ENCODE measurements at regions of chr7 and their contacts with region 1.

Region 1: DNA sequence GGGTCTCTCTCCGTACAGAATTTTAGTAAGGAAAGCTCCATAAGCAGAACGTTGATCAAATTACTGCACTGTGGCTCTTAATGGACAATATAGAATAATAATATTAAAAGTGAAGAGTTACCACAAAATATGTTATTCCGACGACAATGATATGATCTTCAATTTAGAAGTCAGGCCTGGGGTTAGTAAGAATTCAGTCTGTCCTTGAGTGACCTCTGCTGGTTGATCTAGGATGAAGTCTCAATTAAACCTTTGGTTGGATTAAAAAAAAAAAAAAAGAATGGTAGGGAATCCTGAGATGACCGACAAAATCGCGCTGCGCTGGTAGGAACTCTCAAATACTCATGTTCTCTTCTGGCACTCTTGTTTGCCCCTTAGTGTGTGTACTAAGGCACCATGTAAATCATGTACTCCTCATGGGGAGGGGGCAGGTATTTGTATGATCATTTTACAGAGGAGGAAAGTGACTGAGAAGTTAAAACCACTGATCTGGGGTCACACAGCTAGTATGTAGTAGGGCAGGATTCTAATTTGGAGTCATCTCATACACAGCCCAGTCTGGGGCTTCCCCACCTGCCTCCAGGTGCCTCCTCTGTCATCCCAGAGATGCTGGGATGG is 161.3 kb upstream of the NPVF start:
- DNase-seq: no peak
- H3K4me3 ChIP-seq: no peak overlapping the region
- H3K27ac ChIP-seq: no peak overlapping the region
- H3K4me1 ChIP-seq: peaks cover 0 to 53% (median 48%) of the 10 kb centered on the region in 4 donors
- H3K27me3 ChIP-seq: no peaks in the 10 kb centered on the region
- CTCF ChIP-seq: peak; percentile 33 to 65 (median 50)
- EP300 ChIP-seq: no peak
- POLR2A ChIP-seq: no peak

Region 2: GRCh38 chr7:25259587-25260243 is 129.9 kb before region 1 on chr7:
- intact Hi-C with region 1: loop called (anchors 1 kb)
- DNase-seq: peak; percentile 80
- H3K4me3 ChIP-seq: no peak overlapping the region
- H3K27ac ChIP-seq: no peak overlapping the region
- H3K4me1 ChIP-seq: peaks cover 0 to 26% (median 18%) of the 10 kb centered on the region in 4 donors
- H3K27me3 ChIP-seq: no peaks in the 10 kb centered on the region
- CTCF ChIP-seq: peak; percentile 73 to 86 (median 82)
- EP300 ChIP-seq: no peak
- POLR2A ChIP-seq: no peak

Region 3: GRCh38 chr7:25456467-25457171 is 67.0 kb after region 1 on chr7:
- intact Hi-C with region 1: loop called (anchors 5 kb)
- DNase-seq: peak; percentile 68
- H3K4me3 ChIP-seq: no peak overlapping the region
- H3K27ac ChIP-seq: peak overlapping the region in 3 of 4 donors; percentile 50 to 61 (median 56)
- H3K4me1 ChIP-seq: peaks cover 0 to 29% (median 15%) of the 10 kb centered on the region in 4 donors
- H3K27me3 ChIP-seq: no peaks in the 10 kb centered on the region
- CTCF ChIP-seq: no peak
- EP300 ChIP-seq: peak in 1 of 4 donors; percentile 9
- POLR2A ChIP-seq: no peak

Region 4: DNA sequence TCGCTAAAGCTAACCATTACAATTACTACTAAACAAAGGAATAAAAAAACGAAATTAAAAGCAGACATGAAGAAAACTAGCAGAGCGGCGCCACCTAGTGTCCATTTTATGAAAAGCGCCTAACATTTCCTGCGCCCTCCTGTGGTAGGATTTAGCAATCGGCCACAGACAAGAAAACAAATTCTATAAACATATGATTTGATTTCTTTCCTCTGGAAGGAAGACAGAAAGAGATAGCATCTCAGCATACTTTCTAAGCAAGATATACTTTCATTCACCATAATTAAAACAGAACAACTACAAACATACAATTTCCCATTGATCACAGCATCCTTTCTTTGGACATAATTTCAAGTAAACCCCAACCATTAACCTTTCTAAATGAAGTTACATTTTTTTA is 176.4 kb after region 1 on chr7:
- intact Hi-C with region 1: loop called (anchors 1 kb)
- DNase-seq: peak; percentile 81
- H3K4me3 ChIP-seq: no peak overlapping the region
- H3K27ac ChIP-seq: peak overlapping the region in 2 of 4 donors; percentile 70 to 76
- H3K4me1 ChIP-seq: peaks cover 0 to 48% (median 40%) of the 10 kb centered on the region in 4 donors
- H3K27me3 ChIP-seq: no peaks in the 10 kb centered on the region
- CTCF ChIP-seq: peak; percentile 99 to 100 (median 100)
- EP300 ChIP-seq: no peak
- POLR2A ChIP-seq: no peak

Region 5: DNA sequence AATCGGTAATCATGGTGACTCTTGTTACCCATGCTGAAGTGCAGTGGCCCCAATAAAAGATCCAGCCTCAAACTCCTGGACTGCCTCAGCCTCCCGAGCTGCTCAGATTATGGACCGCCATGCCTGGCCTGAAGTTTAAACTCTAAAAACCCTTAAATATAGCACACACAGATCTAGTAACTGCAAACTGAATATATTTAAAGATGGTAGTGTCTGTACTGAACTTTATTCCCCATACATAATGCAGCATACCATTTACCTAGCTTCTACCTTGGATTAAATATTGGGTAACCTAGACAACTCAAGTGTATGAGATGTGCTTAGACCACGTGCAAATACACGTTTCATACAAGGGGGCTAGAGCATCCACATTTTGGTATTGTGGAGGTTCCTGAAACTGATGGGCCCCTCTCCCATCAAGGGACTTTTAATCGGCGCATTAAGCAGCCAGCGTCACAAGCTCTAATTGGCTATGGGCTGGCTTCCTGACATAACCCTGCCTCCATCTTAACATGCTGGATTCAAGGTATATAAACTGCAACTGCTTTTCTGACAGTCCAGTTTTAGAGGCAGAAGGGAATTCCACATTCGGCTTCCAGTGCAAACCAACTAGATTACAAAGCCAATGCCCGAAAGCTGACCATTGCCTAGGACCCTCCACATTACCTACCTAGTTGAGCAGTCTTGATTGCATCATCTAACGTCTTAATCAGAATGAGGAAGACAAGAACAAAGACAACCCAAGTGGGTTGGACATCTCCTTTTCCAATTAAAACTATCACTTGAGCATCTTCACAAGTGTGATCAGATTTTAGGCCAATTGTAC is 798.0 kb after region 1 on chr7:
- intact Hi-C with region 1: no loop called
- DNase-seq: no peak
- H3K4me3 ChIP-seq: no peak overlapping the region
- H3K27ac ChIP-seq: peak overlapping the region in 1 of 4 donors; percentile 14
- H3K4me1 ChIP-seq: peaks cover 0 to 22% (median 12%) of the 10 kb centered on the region in 4 donors
- H3K27me3 ChIP-seq: no peaks in the 10 kb centered on the region
- CTCF ChIP-seq: no peak
- EP300 ChIP-seq: no peak
- POLR2A ChIP-seq: no peak

Measured in sigmoid colon (tissue), 7 donors.